ENCODE measurements at regions of chr6 and their contacts with region 1.

Region 1: GRCh38 chr6:118101831-118102230 is 194.8 kb downstream of the SLC35F1 start:
- DNase-seq: no peak
- H3K4me3 ChIP-seq: no peak overlapping the region
- H3K27ac ChIP-seq: no peak overlapping the region
- H3K4me1 ChIP-seq: no peaks in the 10 kb centered on the region
- H3K27me3 ChIP-seq: no peaks in the 10 kb centered on the region
- CTCF ChIP-seq: no peak

Region 2: GRCh38 chr6:117985916-117986315 is 115.9 kb before region 1 on chr6:
- CTCF ChIA-PET with region 1: no interaction called
- dilution Hi-C with region 1: no loop called
- in situ Hi-C with region 1: no loop called
- intact Hi-C with region 1: no loop called
- DNase-seq: no peak
- H3K4me3 ChIP-seq: no peak overlapping the region
- H3K27ac ChIP-seq: no peak overlapping the region
- H3K4me1 ChIP-seq: no peaks in the 10 kb centered on the region
- H3K27me3 ChIP-seq: no peaks in the 10 kb centered on the region
- CTCF ChIP-seq: no peak

Region 3: DNA sequence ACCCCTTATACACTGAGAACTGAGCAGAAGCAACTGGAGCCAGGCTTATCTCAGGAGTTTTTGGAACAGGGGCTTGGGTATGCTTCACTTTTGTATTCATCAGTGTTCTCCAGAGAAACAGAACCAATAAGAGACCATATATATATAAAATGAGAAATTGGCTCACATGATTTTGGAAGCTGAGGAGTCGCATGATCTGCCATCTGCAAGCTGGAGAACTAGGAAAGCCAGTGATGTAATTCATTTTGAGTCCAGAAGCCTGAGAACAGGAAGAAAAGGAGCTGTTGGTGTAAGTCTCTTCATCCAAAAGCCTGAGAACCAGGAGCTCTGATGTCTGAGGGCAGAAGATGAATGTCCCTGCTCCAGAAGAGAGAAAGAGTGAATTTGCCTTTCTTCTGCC is 77.2 kb after region 1 on chr6:
- CTCF ChIA-PET with region 1: no interaction called
- dilution Hi-C with region 1: loop called (anchors 5 kb)
- in situ Hi-C with region 1: no loop called
- intact Hi-C with region 1: no loop called
- DNase-seq: no peak
- H3K4me3 ChIP-seq: no peak overlapping the region
- H3K27ac ChIP-seq: no peak overlapping the region
- H3K4me1 ChIP-seq: no peaks in the 10 kb centered on the region
- H3K27me3 ChIP-seq: no peaks in the 10 kb centered on the region
- CTCF ChIP-seq: no peak

Measured in mammary epithelial cell (primary cell).